HEK293 (cell line): ENCODE measurements at regions of chr4 and their contacts with region 1.

Region 1: DNA sequence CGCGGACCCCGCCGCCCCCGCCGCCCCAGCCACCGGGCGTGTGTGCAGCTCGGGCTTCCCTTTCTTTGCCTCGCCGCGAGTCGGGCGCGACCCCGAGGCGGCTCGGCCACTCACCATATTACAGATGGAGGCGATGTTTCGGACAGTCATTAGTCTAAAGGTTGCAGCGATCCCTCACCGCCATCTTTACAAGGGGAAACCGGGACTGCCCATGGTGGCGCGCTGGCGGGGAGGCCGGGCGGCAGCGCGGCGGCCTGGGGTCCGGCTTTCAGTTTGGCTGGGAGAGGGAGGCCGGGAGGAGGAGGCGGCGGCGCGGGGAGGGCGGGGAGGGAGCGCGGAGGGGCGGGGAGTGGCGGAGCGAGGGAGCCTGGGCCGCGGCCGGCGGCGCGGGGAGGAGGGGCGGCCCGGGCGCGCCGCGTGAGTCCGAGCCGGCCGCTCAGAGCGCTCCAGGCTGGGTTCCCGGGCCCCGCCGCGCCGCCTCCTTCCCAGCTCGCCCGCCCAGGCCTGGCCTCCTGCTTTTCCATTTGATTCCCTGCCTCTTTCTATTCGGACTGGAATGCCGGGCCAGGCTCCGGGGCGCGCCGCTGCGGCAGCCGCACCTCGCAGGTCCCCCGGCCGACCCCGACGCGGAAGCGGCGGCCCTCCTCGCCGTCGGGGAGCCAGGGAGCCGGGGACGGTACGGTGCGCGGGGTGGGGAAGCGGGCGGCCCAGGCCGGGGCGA is at the start of gene USP46:
- H3K4me3 ChIP-seq: peak within 1 kb of the TSS; percentile 75
- H3K27ac ChIP-seq: peak within 1 kb of the TSS; percentile 81
- H3K4me1 ChIP-seq: peaks cover 8% of the 10 kb centered on the region
- CTCF ChIP-seq: no peak

Region 2: GRCh38 chr4:52545099-52546069 is 113.8 kb before region 1 on chr4:
- CTCF ChIA-PET with region 1: interaction called, 10 read pairs
- POLR2A ChIA-PET with region 1: no interaction called
- H3K4me3 ChIP-seq: no peak overlapping the region
- H3K27ac ChIP-seq: no peak overlapping the region
- H3K4me1 ChIP-seq: no peaks in the 10 kb centered on the region
- CTCF ChIP-seq: peak; percentile 48

Region 3: GRCh38 chr4:52712172-52712990 is 53.2 kb after region 1 on chr4:
- CTCF ChIA-PET with region 1: interaction called, 3 read pairs
- POLR2A ChIA-PET with region 1: interaction called, 16 read pairs
- H3K4me3 ChIP-seq: peak overlapping the region; percentile 70
- H3K27ac ChIP-seq: peak overlapping the region; percentile 71; the same call in 1 of the 2 replicates
- H3K4me1 ChIP-seq: no peaks in the 10 kb centered on the region
- CTCF ChIP-seq: no peak

Region 4: GRCh38 chr4:52853351-52853750 is 194.2 kb after region 1 on chr4:
- CTCF ChIA-PET with region 1: no interaction called
- POLR2A ChIA-PET with region 1: no interaction called
- H3K4me3 ChIP-seq: no peak overlapping the region
- H3K27ac ChIP-seq: no peak overlapping the region
- H3K4me1 ChIP-seq: no peaks in the 10 kb centered on the region
- CTCF ChIP-seq: no peak